GM10248 (cell line): ENCODE measurements at regions of chr13 and their contacts with region 1.

Region 1: GRCh38 chr13:96948127-96948526 is 46.1 kb downstream of the OXGR1 start:
- DNase-seq: no peak
- CTCF ChIP-seq: no peak

Region 2: GRCh38 chr13:96700657-96701056 is 247.5 kb before region 1 on chr13:
- CTCF ChIA-PET with region 1: no interaction called
- POLR2A ChIA-PET with region 1: no interaction called
- DNase-seq: no peak
- CTCF ChIP-seq: no peak

Region 3: DNA sequence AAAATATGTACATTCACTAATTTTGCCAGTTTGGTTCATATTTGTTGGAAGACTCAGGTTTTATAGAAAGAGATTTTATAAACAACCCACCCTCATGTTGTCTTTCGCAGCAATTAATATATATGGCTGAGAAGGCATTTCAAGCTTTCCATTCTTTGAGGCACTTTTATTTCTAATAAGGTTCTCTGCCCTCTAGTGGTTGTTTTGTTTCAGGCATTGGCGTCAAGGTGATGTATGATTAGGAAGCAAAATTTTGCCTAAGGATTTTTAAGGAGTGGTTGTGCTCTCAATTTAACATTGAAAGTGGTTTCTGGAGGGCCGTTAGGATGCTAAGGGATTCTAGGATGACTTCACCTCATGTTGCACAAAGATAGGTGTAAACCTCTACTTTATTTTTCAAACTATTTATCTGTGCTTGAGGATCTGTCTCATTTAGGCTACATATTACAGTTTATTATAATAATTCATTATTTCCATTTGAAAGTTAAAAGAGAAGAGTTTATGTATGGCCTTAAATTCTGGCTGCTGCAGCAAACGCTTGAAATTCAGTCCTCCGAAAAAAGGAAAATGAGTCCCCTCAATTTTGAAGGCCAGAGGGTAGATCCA is 10.3 kb after region 1 on chr13:
- CTCF ChIA-PET with region 1: interaction called, 16 read pairs
- POLR2A ChIA-PET with region 1: no interaction called
- DNase-seq: no peak
- CTCF ChIP-seq: peak; percentile 63